H1 (cell line): ENCODE measurements at regions of chr11 and their contacts with region 1.

Region 1: DNA sequence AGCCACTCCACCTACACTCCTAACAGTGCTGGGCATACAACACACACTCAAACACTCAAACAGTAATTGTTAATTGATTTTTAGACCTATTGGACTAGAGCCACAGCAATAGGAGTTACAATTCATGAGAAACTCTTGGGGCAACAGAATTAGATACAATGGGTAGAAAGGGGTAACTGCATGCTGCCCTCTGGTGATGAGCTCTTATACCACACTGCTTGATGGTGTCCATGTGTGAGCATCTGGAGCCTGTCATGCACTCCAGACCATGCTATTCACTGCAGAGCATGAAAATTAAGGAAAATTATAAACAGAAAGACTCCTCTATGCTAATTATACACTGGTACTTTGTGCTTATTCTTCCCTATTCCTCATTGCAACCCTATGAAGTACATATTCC is 975.5 kb upstream of the CCDC90B start:
- DNase-seq: peak; percentile 13 to 46
- H3K4me3 ChIP-seq: no peak overlapping the region
- H3K27ac ChIP-seq: no peak overlapping the region
- H3K4me1 ChIP-seq: no peaks in the 10 kb centered on the region
- H3K27me3 ChIP-seq: no peaks in the 10 kb centered on the region
- CTCF ChIP-seq: peak; percentile 37 to 67 (median 56)
- EP300 ChIP-seq: no peak
- POLR2A ChIP-seq: no peak
- RAD21 ChIP-seq: peak; percentile 79

Region 2: DNA sequence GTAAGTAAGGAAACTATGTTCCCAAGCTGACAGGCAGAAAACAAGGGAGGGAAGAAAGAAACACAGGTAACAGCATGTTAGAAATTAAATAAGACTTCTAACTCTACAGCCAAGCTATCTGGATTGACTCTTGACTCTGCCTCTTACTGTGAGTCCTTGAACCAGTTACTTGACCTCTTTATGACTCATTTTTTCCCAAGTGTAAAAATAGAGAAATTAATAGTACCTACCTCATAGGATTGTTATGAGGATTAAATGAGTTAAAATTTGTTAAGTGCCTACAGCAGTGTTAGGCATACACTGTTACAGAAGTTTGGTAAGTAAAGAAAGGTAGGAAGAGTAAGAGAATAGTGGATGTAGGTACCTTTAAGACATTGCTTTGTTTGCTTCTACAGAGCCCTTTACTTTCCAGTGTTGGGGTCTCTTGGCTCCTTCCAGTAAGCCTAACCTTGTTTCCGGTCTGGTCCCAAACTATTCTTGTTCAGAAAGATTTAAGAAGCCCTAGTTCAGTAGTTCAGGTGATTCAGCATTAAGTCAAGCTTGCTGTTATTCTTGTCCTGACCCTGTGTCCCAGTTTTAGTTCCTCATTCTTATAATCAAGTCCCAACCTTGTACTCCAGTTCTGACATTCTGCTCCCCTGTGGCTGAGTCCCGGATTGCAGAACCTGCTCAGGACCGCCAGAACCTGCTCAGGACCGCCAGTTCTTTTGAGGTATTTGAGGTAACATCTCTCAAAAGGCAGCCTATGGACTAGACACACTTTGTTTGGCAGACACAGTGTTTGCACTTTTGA is 12.2 kb before region 1 on chr11:
- CTCF ChIA-PET with region 1: interaction called, 25 read pairs
- POLR2A ChIA-PET with region 1: no interaction called
- DNase-seq: no peak
- H3K4me3 ChIP-seq: no peak overlapping the region
- H3K27ac ChIP-seq: no peak overlapping the region
- H3K4me1 ChIP-seq: no peaks in the 10 kb centered on the region
- H3K27me3 ChIP-seq: no peaks in the 10 kb centered on the region
- CTCF ChIP-seq: no peak
- EP300 ChIP-seq: no peak
- POLR2A ChIP-seq: no peak
- RAD21 ChIP-seq: no peak